ENCODE measurements at regions of chr6 and their contacts with region 1.

Region 1: GRCh38 chr6:47047479-47048407 is 5.6 kb upstream of the ADGRF1 start:
- DNase-seq: peak; percentile 61 to 72 (median 63)
- ATAC-seq: peak; percentile 96
- H3K4me3 ChIP-seq: no peak overlapping the region
- H3K27ac ChIP-seq: peak overlapping the region in 3 of 4 donors; percentile 33 to 57 (median 54)
- H3K4me1 ChIP-seq: peaks cover 10% of the 10 kb centered on the region
- H3K27me3 ChIP-seq: no peaks in the 10 kb centered on the region
- CTCF ChIP-seq: peak; percentile 34 to 91 (median 85)
- POLR2A ChIP-seq: no peak

Region 2: GRCh38 chr6:46848684-46849360 is 198.9 kb before region 1 on chr6:
- intact Hi-C with region 1: loop called (anchors 10 kb)
- DNase-seq: peak; percentile 87 to 91 (median 90)
- ATAC-seq: peak; percentile 95
- H3K4me3 ChIP-seq: no peak overlapping the region
- H3K27ac ChIP-seq: no peak overlapping the region
- H3K4me1 ChIP-seq: peaks cover 5% of the 10 kb centered on the region
- H3K27me3 ChIP-seq: no peaks in the 10 kb centered on the region
- CTCF ChIP-seq: peak; percentile 89 to 99 (median 97)
- POLR2A ChIP-seq: no peak